ENCODE measurements at regions of chrX and their contacts with region 1.

Region 1: GRCh38 chrX:11100281-11101035 is 10.7 kb upstream of the HCCS start:
- DNase-seq: peak; percentile 58 to 63
- H3K4me3 ChIP-seq: no peak overlapping the region
- H3K4me3 Mint-ChIP-seq: peak overlapping the region; percentile 38
- H3K27ac Mint-ChIP-seq: peak overlapping the region; percentile 33
- H3K4me1 ChIP-seq: peaks cover 24% of the 10 kb centered on the region; the same call in 1 of the 2 replicates
- H3K4me1 Mint-ChIP-seq: no peaks in the 10 kb centered on the region
- H3K27me3 ChIP-seq: no peaks in the 10 kb centered on the region
- H3K27me3 Mint-ChIP-seq: no peaks in the 10 kb centered on the region
- CTCF ChIP-seq: peak; percentile 28 to 34

Region 2: GRCh38 chrX:10722851-10723250 is 377.6 kb before region 1 on chrX:
- CTCF ChIA-PET with region 1: interaction called, 3 read pairs
- POLR2A ChIA-PET with region 1: no interaction called
- intact Hi-C with region 1: loop called (anchors 2 kb)
- DNase-seq: peak; percentile 45 to 56
- H3K4me3 ChIP-seq: no peak overlapping the region
- H3K4me3 Mint-ChIP-seq: no peak overlapping the region
- H3K27ac Mint-ChIP-seq: no peak overlapping the region
- H3K4me1 ChIP-seq: no peaks in the 10 kb centered on the region
- H3K4me1 Mint-ChIP-seq: no peaks in the 10 kb centered on the region
- H3K27me3 ChIP-seq: no peaks in the 10 kb centered on the region
- H3K27me3 Mint-ChIP-seq: no peaks in the 10 kb centered on the region
- CTCF ChIP-seq: peak; percentile 62 to 65

Region 3: DNA sequence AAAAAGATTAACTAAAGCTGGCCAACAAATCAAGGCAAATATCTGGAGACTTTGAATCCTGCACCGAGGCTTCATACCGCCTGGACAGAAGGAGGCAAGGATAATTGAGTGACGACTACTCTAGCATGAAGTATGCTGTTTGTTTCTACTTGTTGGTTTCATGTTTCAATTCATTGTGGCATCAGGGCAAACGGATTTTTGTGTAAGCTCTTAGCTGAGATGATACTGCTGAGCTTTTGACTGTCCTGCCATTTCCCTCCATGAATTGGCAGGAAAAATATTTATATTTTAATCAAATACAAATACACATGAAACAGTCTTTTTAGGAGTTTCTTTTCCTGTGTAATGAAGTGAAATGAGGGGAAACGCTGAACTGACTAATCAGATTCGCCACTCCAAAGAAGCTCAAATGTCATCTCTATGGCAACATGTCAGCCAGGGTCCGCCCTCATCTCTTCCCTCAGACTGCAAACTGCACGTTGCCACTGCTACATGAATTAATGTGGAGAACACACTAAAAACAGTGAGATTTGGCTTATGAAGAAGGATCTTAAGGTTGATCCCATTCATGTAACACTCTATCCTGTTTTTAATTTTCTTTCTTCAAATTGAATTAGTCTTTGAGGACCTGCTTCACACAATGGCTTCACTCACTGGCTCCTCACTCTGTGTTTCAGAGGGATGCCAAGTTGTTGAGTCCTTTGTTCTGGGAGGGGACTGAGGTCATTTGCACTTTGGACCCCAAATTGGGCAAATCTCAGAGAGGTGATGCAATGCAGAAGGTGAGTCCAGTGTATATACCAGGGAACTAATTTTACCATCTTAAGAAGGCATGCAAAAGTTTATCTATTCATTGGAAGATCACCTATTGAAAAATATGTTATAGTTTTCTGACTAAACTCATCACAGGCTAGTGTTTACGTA is 330.5 kb before region 1 on chrX:
- CTCF ChIA-PET with region 1: no interaction called
- POLR2A ChIA-PET with region 1: no interaction called
- intact Hi-C with region 1: loop called (anchors 1 kb)
- DNase-seq: peak; percentile 33 to 34
- H3K4me3 ChIP-seq: no peak overlapping the region
- H3K4me3 Mint-ChIP-seq: no peak overlapping the region
- H3K27ac Mint-ChIP-seq: no peak overlapping the region
- H3K4me1 ChIP-seq: peaks cover 12% of the 10 kb centered on the region
- H3K4me1 Mint-ChIP-seq: peaks cover 7% of the 10 kb centered on the region
- H3K27me3 ChIP-seq: no peaks in the 10 kb centered on the region
- H3K27me3 Mint-ChIP-seq: no peaks in the 10 kb centered on the region
- CTCF ChIP-seq: no peak

Region 4: DNA sequence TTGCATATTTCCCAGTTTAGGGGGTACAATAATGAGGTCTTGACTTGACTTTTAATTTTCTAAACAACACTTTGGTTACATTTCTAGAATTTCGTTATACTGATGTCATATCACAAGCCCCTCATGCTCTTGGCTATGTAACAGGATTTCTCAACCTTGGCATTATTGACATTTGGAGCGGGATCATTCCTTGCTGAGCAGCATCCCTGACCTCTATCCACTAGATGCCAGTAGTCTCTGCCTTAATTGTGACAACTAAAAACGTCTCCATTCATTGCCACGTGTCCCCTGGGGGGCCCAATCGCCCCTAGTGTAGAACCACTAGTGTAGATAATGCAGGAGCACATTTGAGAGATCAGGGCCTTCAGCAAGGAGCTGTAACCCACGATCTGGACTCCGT is 245.9 kb before region 1 on chrX:
- CTCF ChIA-PET with region 1: no interaction called
- POLR2A ChIA-PET with region 1: no interaction called
- intact Hi-C with region 1: loop called (anchors 1 kb)
- DNase-seq: peak; percentile 9 to 27
- H3K4me3 ChIP-seq: no peak overlapping the region
- H3K4me3 Mint-ChIP-seq: no peak overlapping the region
- H3K27ac Mint-ChIP-seq: no peak overlapping the region
- H3K4me1 ChIP-seq: no peaks in the 10 kb centered on the region
- H3K4me1 Mint-ChIP-seq: no peaks in the 10 kb centered on the region
- H3K27me3 ChIP-seq: no peaks in the 10 kb centered on the region
- H3K27me3 Mint-ChIP-seq: no peaks in the 10 kb centered on the region
- CTCF ChIP-seq: no peak

Region 5: DNA sequence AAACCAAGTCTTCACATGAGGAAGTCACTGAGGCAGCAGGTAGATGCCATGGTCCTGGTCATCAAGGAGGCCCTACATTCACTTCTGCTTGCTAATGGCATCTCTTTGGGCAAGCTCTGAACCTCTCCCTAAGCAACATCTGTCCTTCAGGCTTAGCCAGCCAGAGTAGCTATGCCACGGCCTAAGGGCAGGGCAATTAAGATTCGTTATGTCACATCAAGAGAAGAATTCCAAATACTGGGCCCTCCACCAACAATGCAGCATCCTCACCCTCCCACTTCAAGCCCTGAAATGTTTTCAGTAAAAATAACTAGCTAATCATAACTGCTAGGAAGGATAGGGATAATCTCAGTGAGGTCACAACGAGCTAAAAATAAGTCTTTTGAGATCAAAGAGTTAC is 110.0 kb before region 1 on chrX:
- CTCF ChIA-PET with region 1: interaction called, 3 read pairs
- POLR2A ChIA-PET with region 1: no interaction called
- intact Hi-C with region 1: loop called (anchors 10 kb)
- DNase-seq: no peak
- H3K4me3 ChIP-seq: no peak overlapping the region
- H3K4me3 Mint-ChIP-seq: no peak overlapping the region
- H3K27ac Mint-ChIP-seq: no peak overlapping the region
- H3K4me1 ChIP-seq: peaks cover 59% of the 10 kb centered on the region
- H3K4me1 Mint-ChIP-seq: peaks cover 28% of the 10 kb centered on the region
- H3K27me3 ChIP-seq: no peaks in the 10 kb centered on the region
- H3K27me3 Mint-ChIP-seq: no peaks in the 10 kb centered on the region
- CTCF ChIP-seq: no peak

Measured in Caco-2 (cell line).